ENCODE measurements at regions of chr5 and their contacts with region 1.

Region 1: DNA sequence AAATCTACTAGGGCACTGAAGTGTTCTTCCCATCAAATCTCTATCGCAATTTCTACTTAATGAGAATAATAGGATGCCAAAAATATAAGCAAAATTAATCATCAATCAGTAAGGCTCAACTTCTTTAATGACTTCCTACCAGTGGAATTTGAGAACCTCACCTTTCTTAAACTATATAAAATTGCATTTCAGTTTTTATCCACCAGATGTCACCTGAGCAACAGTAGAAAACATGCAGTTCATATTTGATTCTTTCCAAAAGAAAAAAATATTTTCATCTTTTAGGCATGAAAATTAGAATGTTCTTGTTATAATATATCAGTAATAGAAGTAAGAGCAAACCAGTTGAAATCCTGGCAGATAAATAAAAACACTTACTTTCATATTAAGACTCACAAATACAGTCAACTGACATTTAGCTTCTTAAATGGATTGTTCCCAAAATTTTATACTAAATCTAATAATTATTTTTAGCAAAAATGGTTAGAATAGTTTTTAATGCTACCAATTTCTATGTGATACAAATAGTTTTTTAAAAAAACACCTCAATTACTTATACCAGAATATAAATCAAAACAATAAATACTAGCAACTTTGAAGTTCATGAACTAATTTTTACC is 13.4 kb upstream of the CCDC112 start:
- DNase-seq: peak in 1 of 2 donors; percentile 70
- ATAC-seq: peak in 2 of 3 donors; percentile 46 to 53
- H3K4me3 ChIP-seq: no peak overlapping the region
- H3K4me3 Mint-ChIP-seq: no peak overlapping the region
- H3K27ac ChIP-seq: no peak overlapping the region
- H3K27ac Mint-ChIP-seq: no peak overlapping the region
- H3K4me1 ChIP-seq: no peaks in the 10 kb centered on the region
- H3K4me1 Mint-ChIP-seq: no peaks in the 10 kb centered on the region
- H3K27me3 ChIP-seq: peaks cover 6% of the 10 kb centered on the region
- H3K27me3 Mint-ChIP-seq: peaks cover 22 to 48% of the 10 kb centered on the region in 2 donors
- CTCF ChIP-seq: peak; percentile 79

Region 2: GRCh38 chr5:115579747-115580173 is 269.9 kb after region 1 on chr5:
- intact Hi-C with region 1: loop called (anchors 1 kb)
- DNase-seq: no peak
- ATAC-seq: no peak
- H3K4me3 ChIP-seq: no peak overlapping the region
- H3K4me3 Mint-ChIP-seq: no peak overlapping the region
- H3K27ac ChIP-seq: no peak overlapping the region
- H3K27ac Mint-ChIP-seq: no peak overlapping the region
- H3K4me1 ChIP-seq: no peaks in the 10 kb centered on the region
- H3K4me1 Mint-ChIP-seq: no peaks in the 10 kb centered on the region
- H3K27me3 ChIP-seq: no peaks in the 10 kb centered on the region
- H3K27me3 Mint-ChIP-seq: no peaks in the 10 kb centered on the region
- CTCF ChIP-seq: no peak

Region 3: DNA sequence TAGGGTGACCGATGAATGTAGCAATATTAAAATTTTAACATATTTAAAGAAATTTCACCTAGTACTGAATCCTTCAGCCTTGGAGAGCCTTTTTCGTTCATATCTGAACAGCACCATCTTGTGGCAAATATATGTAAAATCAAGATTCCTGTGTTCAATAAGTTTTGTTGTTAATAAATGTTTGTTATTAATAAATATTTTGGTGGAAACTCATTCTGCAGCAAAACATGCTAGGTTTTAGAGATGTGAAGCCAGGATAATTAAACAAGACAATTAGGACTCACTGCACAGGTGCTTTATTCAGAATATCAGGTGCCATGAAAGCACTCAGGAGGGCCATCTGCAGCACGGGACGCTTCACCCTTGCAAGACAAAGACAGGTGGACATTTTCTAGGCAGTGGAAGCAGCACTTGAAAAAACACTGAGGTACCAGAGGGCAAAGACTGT is 276.8 kb after region 1 on chr5:
- intact Hi-C with region 1: loop called (anchors 1 kb)
- DNase-seq: peak in 1 of 2 donors; percentile 54
- ATAC-seq: peak; percentile 44 to 53 (median 52)
- H3K4me3 ChIP-seq: no peak overlapping the region
- H3K4me3 Mint-ChIP-seq: no peak overlapping the region
- H3K27ac ChIP-seq: no peak overlapping the region
- H3K27ac Mint-ChIP-seq: no peak overlapping the region
- H3K4me1 ChIP-seq: no peaks in the 10 kb centered on the region
- H3K4me1 Mint-ChIP-seq: no peaks in the 10 kb centered on the region
- H3K27me3 ChIP-seq: no peaks in the 10 kb centered on the region
- H3K27me3 Mint-ChIP-seq: no peaks in the 10 kb centered on the region
- CTCF ChIP-seq: peak; percentile 71

Region 4: GRCh38 chr5:115831163-115831768 is 521.4 kb after region 1 on chr5:
- intact Hi-C with region 1: loop called (anchors 5 kb)
- DNase-seq: peak in 1 of 2 donors; percentile 70
- ATAC-seq: peak; percentile 73 to 83 (median 78)
- H3K4me3 ChIP-seq: no peak overlapping the region
- H3K4me3 Mint-ChIP-seq: no peak overlapping the region
- H3K27ac ChIP-seq: no peak overlapping the region
- H3K27ac Mint-ChIP-seq: peak overlapping the region; percentile 19 to 29
- H3K4me1 ChIP-seq: no peaks in the 10 kb centered on the region
- H3K4me1 Mint-ChIP-seq: peaks cover 9 to 25% of the 10 kb centered on the region in 2 donors
- H3K27me3 ChIP-seq: no peaks in the 10 kb centered on the region
- H3K27me3 Mint-ChIP-seq: no peaks in the 10 kb centered on the region
- CTCF ChIP-seq: peak; percentile 81

Region 5: DNA sequence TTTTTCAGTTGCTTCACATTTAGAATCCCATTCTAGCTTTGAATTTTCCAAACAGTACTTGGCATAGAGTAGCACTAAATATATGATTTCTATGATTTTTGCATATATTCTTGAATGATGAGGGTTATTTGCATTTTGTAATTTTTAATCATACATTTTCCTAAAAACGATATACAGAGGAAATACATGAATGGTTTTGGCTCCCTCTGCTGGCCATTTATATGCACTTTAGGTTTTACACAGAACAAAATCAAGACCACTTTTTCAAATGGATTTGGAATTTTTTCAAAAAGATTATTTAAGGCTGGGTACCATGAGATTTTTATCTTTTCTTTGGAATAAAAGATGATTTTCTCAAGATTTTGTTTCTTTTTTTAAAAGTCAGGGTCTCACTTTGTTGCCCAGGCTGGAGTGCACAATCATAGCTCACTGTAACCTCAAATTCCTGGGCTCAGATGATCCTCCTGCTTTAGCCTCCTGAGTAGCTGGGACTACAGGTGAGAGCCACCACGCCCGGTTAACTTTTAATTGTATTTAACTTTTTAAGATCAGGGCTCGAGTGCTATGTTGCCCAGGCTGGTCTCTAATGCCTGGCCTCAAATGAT is 758.3 kb after region 1 on chr5:
- intact Hi-C with region 1: loop called (anchors 5 kb)
- DNase-seq: peak in 1 of 2 donors; percentile 82
- ATAC-seq: peak in 2 of 3 donors; percentile 68 to 70
- H3K4me3 ChIP-seq: no peak overlapping the region
- H3K4me3 Mint-ChIP-seq: no peak overlapping the region
- H3K27ac ChIP-seq: no peak overlapping the region
- H3K27ac Mint-ChIP-seq: no peak overlapping the region
- H3K4me1 ChIP-seq: no peaks in the 10 kb centered on the region
- H3K4me1 Mint-ChIP-seq: no peaks in the 10 kb centered on the region
- H3K27me3 ChIP-seq: no peaks in the 10 kb centered on the region
- H3K27me3 Mint-ChIP-seq: peaks cover 13 to 27% of the 10 kb centered on the region in 2 donors
- CTCF ChIP-seq: peak; percentile 84

Measured in natural killer cell (primary cell).